Naive thymus-derived CD4-positive, alpha-beta T cell (primary cell): ENCODE measurements at regions of chr5 and their contacts with region 1.

Region 1: DNA sequence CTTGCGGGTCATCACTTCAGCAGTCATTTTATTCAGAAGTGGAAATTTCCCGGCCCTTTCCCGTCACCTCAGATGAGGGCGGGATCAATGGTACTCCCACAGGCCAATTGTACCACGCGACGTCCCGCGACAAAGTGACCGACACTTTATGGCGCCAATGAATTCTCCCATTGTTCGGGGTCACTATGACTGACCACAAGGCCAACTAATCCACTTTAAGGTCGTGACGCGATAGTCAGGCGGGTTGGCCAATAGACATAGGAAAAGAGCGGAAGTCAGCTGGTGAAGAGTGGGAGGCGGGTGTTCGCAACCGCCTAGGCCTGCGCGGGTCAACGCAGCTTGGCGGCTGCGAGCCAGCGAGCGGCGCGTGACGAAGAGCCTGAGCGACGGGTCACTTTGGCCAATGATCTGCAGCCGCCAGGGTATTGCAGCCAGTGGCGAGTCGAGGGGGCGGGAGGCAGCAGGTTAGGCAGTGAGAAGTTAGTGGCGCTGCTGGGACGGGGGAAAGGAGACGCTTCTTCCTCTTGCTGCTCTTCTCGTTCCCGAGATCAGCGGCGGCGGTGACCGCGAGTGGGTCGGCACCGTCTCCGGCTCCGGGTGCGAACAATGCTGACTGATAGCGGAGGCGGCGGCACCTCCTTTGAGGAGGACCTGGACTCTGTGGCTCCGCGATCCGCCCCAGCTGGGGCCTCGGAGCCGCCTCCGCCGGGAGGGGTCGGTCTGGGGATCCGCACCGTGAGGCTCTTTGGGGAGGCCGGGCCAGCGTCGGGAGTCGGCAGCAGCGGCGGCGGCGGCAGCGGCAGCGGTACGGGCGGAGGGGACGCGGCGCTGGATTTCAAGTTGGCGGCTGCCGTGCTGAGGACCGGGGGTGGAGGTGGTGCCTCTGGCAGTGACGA is at the start of gene ANKHD1:
- DNase-seq: peak; percentile 89 to 99 (median 98)
- ATAC-seq: peak; percentile 88
- H3K4me3 ChIP-seq: peak within 1 kb of the TSS; percentile 87
- H3K4me3 Mint-ChIP-seq: peak within 1 kb of the TSS in 1 of 10 donors; percentile 86
- H3K27ac ChIP-seq: peak within 1 kb of the TSS; percentile 90
- H3K27ac Mint-ChIP-seq: peak within 1 kb of the TSS in 2 of 9 donors; percentile 90 to 91
- H3K4me1 ChIP-seq: peaks cover 11 to 30% of the 10 kb centered on the region in 2 donors
- H3K4me1 Mint-ChIP-seq: peaks cover 23 to 45% (median 38%) of the 10 kb centered on the region in 7 donors
- H3K27me3 ChIP-seq: no peaks in the 10 kb centered on the region
- H3K27me3 Mint-ChIP-seq: no peaks in the 10 kb centered on the region
- total RNA-seq, gene ANKHD1: 145 to 240 (median 217) TPM

Region 2: GRCh38 chr5:139341650-139342422 is 1059.8 kb before region 1 on chr5 and contains the start of gene PAIP2:
- CTCF ChIA-PET with region 1: no interaction called
- POLR2A ChIA-PET with region 1: no interaction called
- intact Hi-C with region 1: loop called (anchors 5 to 10 kb)
- DNase-seq: peak; percentile 94 to 98 (median 97)
- ATAC-seq: peak; percentile 95
- H3K4me3 ChIP-seq: peak within 1 kb of the TSS; percentile 96
- H3K4me3 Mint-ChIP-seq: peak within 1 kb of the TSS; percentile 95 to 100 (median 98)
- H3K27ac ChIP-seq: peak within 1 kb of the TSS; percentile 98
- H3K27ac Mint-ChIP-seq: peak within 1 kb of the TSS; percentile 96 to 100 (median 99)
- H3K4me1 ChIP-seq: peaks cover 28 to 30% of the 10 kb centered on the region in 2 donors
- H3K4me1 Mint-ChIP-seq: peaks cover 34 to 65% (median 55%) of the 10 kb centered on the region in 7 donors
- H3K27me3 ChIP-seq: no peaks in the 10 kb centered on the region
- H3K27me3 Mint-ChIP-seq: peaks cover 0 to 5% (median 0%) of the 10 kb centered on the region in 5 donors
- total RNA-seq, gene PAIP2: 88.8 to 121 (median 106) TPM

Region 3: DNA sequence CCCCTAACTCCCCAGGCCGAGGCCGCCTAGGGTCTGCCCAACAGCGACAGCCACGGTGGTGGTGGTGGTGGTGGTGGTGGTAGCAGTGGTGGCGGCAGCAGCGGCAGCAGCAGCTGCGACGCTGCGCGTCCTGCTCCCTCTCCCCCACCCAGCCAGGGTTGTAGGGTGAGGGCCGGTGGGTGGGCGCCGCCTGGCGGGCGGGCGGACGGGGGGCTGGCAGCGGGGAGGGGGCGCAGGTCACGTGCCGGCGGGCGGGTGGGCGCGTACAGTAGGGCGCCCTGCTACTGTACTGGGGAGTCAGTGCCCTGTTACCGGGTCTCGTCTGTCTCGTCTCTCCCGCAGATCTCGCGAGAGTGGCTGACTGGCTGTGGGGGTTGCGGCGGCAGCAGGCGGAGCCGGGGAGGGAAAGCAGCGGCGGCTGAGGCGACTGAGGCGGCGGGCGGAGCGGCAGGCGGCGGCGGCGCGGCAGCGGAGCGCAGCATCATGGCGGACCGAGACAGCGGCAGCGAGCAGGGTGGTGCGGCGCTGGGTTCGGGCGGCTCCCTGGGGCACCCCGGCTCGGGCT is 287.8 kb before region 1 on chr5 and contains the start of gene PURA:
- CTCF ChIA-PET with region 1: no interaction called
- POLR2A ChIA-PET with region 1: no interaction called
- intact Hi-C with region 1: loop called in 1 of 2 experiments (anchors 2 kb)
- DNase-seq: peak; percentile 94 to 98 (median 97)
- ATAC-seq: peak; percentile 93
- H3K4me3 ChIP-seq: peak within 1 kb of the TSS; percentile 77
- H3K4me3 Mint-ChIP-seq: peak within 1 kb of the TSS; percentile 86 to 97 (median 94)
- H3K27ac ChIP-seq: peak within 1 kb of the TSS; percentile 89
- H3K27ac Mint-ChIP-seq: peak within 1 kb of the TSS; percentile 88 to 99 (median 95)
- H3K4me1 ChIP-seq: peaks cover 46 to 57% of the 10 kb centered on the region in 2 donors
- H3K4me1 Mint-ChIP-seq: peaks cover 53 to 95% (median 77%) of the 10 kb centered on the region in 7 donors
- H3K27me3 ChIP-seq: peaks cover 0 to 7% of the 10 kb centered on the region in 2 donors
- H3K27me3 Mint-ChIP-seq: peaks cover 0 to 46% (median 4%) of the 10 kb centered on the region in 5 donors
- total RNA-seq, gene PURA: 11.6 to 33.5 (median 13.9) TPM

Region 4: DNA sequence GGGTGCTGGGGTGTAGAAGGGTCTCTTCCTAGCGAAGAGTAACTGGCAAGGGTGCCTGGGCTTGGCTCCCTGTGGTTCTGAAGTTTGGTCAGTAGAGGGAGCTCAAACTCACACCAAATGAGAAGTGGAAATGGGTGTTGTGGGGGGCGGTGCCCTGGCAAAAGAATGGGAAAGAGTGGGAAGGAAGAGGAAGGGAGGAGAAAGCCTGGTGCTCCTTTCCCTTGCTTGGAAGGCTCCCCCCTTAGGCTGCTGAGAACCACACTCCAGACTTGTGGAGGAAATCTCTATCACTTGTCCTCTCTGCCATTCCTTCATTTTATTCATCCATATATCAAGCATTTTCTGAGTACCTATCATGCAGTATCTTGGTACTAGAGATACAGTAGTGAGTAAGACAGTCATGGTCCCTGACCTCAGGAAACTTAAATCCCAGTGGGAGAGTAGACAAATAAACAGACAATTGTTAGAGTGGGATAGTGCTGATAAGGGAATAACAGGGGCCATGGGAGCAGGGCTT is 28.6 kb before region 1 on chr5:
- CTCF ChIA-PET with region 1: interaction called, 3 read pairs
- POLR2A ChIA-PET with region 1: interaction called, 3 read pairs
- intact Hi-C with region 1: loop called in 1 of 2 experiments (anchors 2 kb)
- DNase-seq: peak in 6 of 9 donors; percentile 22 to 47 (median 36)
- ATAC-seq: peak; percentile 76
- H3K4me3 ChIP-seq: no peak overlapping the region
- H3K4me3 Mint-ChIP-seq: no peak overlapping the region
- H3K27ac ChIP-seq: no peak overlapping the region
- H3K27ac Mint-ChIP-seq: peak overlapping the region in 1 of 9 donors; percentile 4
- H3K4me1 ChIP-seq: no peaks in the 10 kb centered on the region
- H3K4me1 Mint-ChIP-seq: peaks cover 0 to 8% (median 4%) of the 10 kb centered on the region in 7 donors
- H3K27me3 ChIP-seq: no peaks in the 10 kb centered on the region
- H3K27me3 Mint-ChIP-seq: no peaks in the 10 kb centered on the region

Region 5: GRCh38 chr5:140564196-140565023 is 162.8 kb after region 1 on chr5 and contains the starts of genes APBB3 and SLC35A4:
- CTCF ChIA-PET with region 1: no interaction called
- POLR2A ChIA-PET with region 1: interaction called, 24 read pairs
- intact Hi-C with region 1: loop called (anchors 1 kb)
- DNase-seq: peak; percentile 89 to 99 (median 98)
- ATAC-seq: peak; percentile 92
- H3K4me3 ChIP-seq: peak within 1 kb of the TSS; percentile 91
- H3K4me3 Mint-ChIP-seq: peak within 1 kb of the TSS; percentile 91 to 96 (median 94)
- H3K27ac ChIP-seq: peak within 1 kb of the TSS; percentile 94
- H3K27ac Mint-ChIP-seq: peak within 1 kb of the TSS; percentile 92 to 99 (median 96)
- H3K4me1 ChIP-seq: peaks cover 21 to 25% of the 10 kb centered on the region in 2 donors
- H3K4me1 Mint-ChIP-seq: peaks cover 27 to 75% (median 62%) of the 10 kb centered on the region in 7 donors
- H3K27me3 ChIP-seq: no peaks in the 10 kb centered on the region
- H3K27me3 Mint-ChIP-seq: no peaks in the 10 kb centered on the region
- total RNA-seq, gene APBB3: 37.9 to 77.8 (median 72.4) TPM
- total RNA-seq, gene SLC35A4: 40.4 to 90.1 (median 52.4) TPM

Region 6: GRCh38 chr5:140664359-140665119 is 262.9 kb after region 1 on chr5 and contains the start of gene WDR55:
- CTCF ChIA-PET with region 1: no interaction called
- POLR2A ChIA-PET with region 1: interaction called, 3 read pairs
- intact Hi-C with region 1: loop called (anchors 1 kb)
- DNase-seq: peak; percentile 91 to 98 (median 94)
- ATAC-seq: peak; percentile 97
- H3K4me3 ChIP-seq: peak within 1 kb of the TSS; percentile 95
- H3K4me3 Mint-ChIP-seq: peak within 1 kb of the TSS; percentile 96 to 100 (median 98)
- H3K27ac ChIP-seq: peak within 1 kb of the TSS; percentile 97
- H3K27ac Mint-ChIP-seq: peak within 1 kb of the TSS; percentile 93 to 100 (median 98)
- H3K4me1 ChIP-seq: peaks cover 0 to 8% of the 10 kb centered on the region in 2 donors
- H3K4me1 Mint-ChIP-seq: peaks cover 17 to 48% (median 38%) of the 10 kb centered on the region in 7 donors
- H3K27me3 ChIP-seq: no peaks in the 10 kb centered on the region
- H3K27me3 Mint-ChIP-seq: no peaks in the 10 kb centered on the region
- total RNA-seq, gene WDR55: 28.5 to 47.6 (median 37.8) TPM

Region 7: DNA sequence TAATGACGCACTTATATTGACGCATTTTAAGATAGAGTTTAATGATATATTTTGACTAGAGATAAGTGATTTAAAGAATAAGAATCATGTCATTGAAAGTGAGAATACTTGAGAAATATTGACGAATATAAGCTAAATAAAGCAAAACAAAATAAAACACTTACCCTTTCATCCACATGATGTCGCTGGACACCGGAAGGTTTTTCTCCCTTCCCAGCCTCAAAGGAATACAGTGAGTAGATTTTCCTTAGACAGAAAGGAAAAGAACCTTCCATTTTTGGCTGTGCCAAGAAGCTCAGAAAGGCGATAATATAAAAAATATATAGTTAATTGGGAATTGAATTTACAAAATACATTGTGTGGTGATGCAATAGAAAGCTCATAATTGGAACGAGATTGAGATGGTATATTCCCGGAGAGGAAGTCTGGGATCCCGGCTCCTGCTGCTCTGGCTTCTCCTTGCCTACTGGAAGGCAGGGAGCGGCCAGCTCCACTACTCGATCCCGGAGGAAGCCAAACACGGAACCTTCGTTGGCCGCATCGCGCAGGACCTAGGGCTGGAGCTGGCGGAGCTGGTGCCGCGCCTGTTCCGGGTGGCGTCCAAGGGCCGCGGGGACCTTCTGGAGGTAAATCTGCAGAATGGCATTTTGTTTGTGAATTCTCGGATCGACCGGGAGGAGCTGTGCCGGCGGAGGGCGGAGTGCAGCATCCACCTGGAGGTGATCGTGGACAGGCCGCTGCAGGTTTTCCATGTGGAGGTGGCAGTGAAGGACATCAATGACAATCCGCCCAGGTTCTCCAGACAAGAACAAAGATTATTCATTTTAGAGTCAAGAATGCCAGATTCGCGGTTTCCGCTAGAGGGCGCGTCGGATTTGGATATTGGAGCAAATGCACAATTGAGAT is 420.0 kb after region 1 on chr5 and contains the start of gene PCDHA5:
- CTCF ChIA-PET with region 1: no interaction called
- POLR2A ChIA-PET with region 1: no interaction called
- intact Hi-C with region 1: no loop called
- DNase-seq: peak in 1 of 9 donors; percentile 20
- ATAC-seq: no peak
- H3K4me3 ChIP-seq: no peak within 1 kb of the TSS
- H3K4me3 Mint-ChIP-seq: no peak within 1 kb of the TSS
- H3K27ac ChIP-seq: no peak within 1 kb of the TSS
- H3K27ac Mint-ChIP-seq: no peak within 1 kb of the TSS
- H3K4me1 ChIP-seq: no peaks in the 10 kb centered on the region
- H3K4me1 Mint-ChIP-seq: no peaks in the 10 kb centered on the region
- H3K27me3 ChIP-seq: peaks cover 0 to 4% of the 10 kb centered on the region in 2 donors
- H3K27me3 Mint-ChIP-seq: peaks cover 0 to 47% (median 31%) of the 10 kb centered on the region in 5 donors
- total RNA-seq, gene PCDHA5: not detected

Region 8: GRCh38 chr5:141618804-141619554 is 1217.4 kb after region 1 on chr5 and contains the start of gene DIAPH1:
- CTCF ChIA-PET with region 1: no interaction called
- POLR2A ChIA-PET with region 1: no interaction called
- intact Hi-C with region 1: loop called (anchors 1 to 5 kb)
- DNase-seq: peak; percentile 91 to 98 (median 96)
- ATAC-seq: peak; percentile 98
- H3K4me3 ChIP-seq: peak within 1 kb of the TSS; percentile 77
- H3K4me3 Mint-ChIP-seq: peak within 1 kb of the TSS; percentile 94 to 100 (median 100)
- H3K27ac ChIP-seq: peak within 1 kb of the TSS; percentile 97
- H3K27ac Mint-ChIP-seq: peak within 1 kb of the TSS; percentile 91 to 99 (median 95)
- H3K4me1 ChIP-seq: peaks cover 11 to 22% of the 10 kb centered on the region in 2 donors
- H3K4me1 Mint-ChIP-seq: peaks cover 44 to 61% (median 56%) of the 10 kb centered on the region in 7 donors
- H3K27me3 ChIP-seq: no peaks in the 10 kb centered on the region
- H3K27me3 Mint-ChIP-seq: no peaks in the 10 kb centered on the region
- total RNA-seq, gene DIAPH1: 163 to 278 (median 173) TPM